K562 (cell line): ENCODE measurements at regions of chr17 and their contacts with region 1.

Region 1: GRCh38 chr17:75077496-75078283 is 10.1 kb upstream of the SLC16A5 start:
- DNase-seq: no peak
- ATAC-seq: no peak
- H3K4me3 ChIP-seq: no peak overlapping the region
- H3K27ac ChIP-seq: no peak overlapping the region
- H3K4me1 ChIP-seq: peaks cover 23 to 45% of the 10 kb centered on the region in 2 experiments
- H3K27me3 ChIP-seq: no peaks in the 10 kb centered on the region
- CTCF ChIP-seq: no peak
- EP300 ChIP-seq: no peak
- POLR2A ChIP-seq: no peak
- RAD21 ChIP-seq: no peak

Region 2: GRCh38 chr17:74987418-74987908 is 90.2 kb before region 1 on chr17 and contains the start of gene CDR2L:
- CTCF ChIA-PET with region 1: no interaction called
- POLR2A ChIA-PET with region 1: no interaction called
- in situ Hi-C with region 1: no loop called
- intact Hi-C with region 1: no loop called
- DNase-seq: peak; percentile 96 to 97 (median 96)
- ATAC-seq: peak; percentile 95
- H3K4me3 ChIP-seq: peak within 1 kb of the TSS; percentile 83
- H3K27ac ChIP-seq: peak within 1 kb of the TSS; percentile 75
- H3K4me1 ChIP-seq: peaks cover 12 to 38% of the 10 kb centered on the region in 2 experiments; a peak in 4 of 5 replicates
- H3K27me3 ChIP-seq: no peaks in the 10 kb centered on the region
- CTCF ChIP-seq: peak in 1 of 3 experiments; percentile 23; a peak in 1 of 6 replicates
- EP300 ChIP-seq: no peak
- POLR2A ChIP-seq: peak; percentile 57
- RAD21 ChIP-seq: no peak
- polyA plus RNA-seq, gene CDR2L: 5.3 to 8.2 TPM

Region 3: GRCh38 chr17:75087558-75088453 is 10.1 kb after region 1 on chr17 and contains the start of gene SLC16A5:
- CTCF ChIA-PET with region 1: no interaction called
- POLR2A ChIA-PET with region 1: interaction called, 11 read pairs
- in situ Hi-C with region 1: no loop called
- intact Hi-C with region 1: no loop called
- DNase-seq: peak; percentile 85 to 96 (median 92)
- ATAC-seq: peak; percentile 88
- H3K4me3 ChIP-seq: peak within 1 kb of the TSS; percentile 34
- H3K27ac ChIP-seq: peak within 1 kb of the TSS; percentile 84
- H3K4me1 ChIP-seq: peaks cover 54 to 59% of the 10 kb centered on the region in 2 experiments
- H3K27me3 ChIP-seq: no peaks in the 10 kb centered on the region; a peak in 1 of 5 replicates
- CTCF ChIP-seq: no peak
- EP300 ChIP-seq: no peak; the same call in 1 of the 2 replicates
- POLR2A ChIP-seq: peak; percentile 71
- RAD21 ChIP-seq: peak in 1 of 2 experiments; percentile 1; a peak in 1 of 4 replicates
- polyA plus RNA-seq, gene SLC16A5: 0.06 to 0.11 TPM